MCF 10A (cell line): ENCODE measurements at regions of chr21 and their contacts with region 1.

Region 1: GRCh38 chr21:25385911-25386474 is 221.3 kb downstream of the MRPL39 start:
- DNase-seq: peak; percentile 75
- H3K4me3 Mint-ChIP-seq: no peak overlapping the region
- H3K27ac Mint-ChIP-seq: no peak overlapping the region
- H3K4me1 Mint-ChIP-seq: peaks cover 12% of the 10 kb centered on the region
- H3K27me3 Mint-ChIP-seq: no peaks in the 10 kb centered on the region
- CTCF ChIP-seq: peak; percentile 73

Region 2: DNA sequence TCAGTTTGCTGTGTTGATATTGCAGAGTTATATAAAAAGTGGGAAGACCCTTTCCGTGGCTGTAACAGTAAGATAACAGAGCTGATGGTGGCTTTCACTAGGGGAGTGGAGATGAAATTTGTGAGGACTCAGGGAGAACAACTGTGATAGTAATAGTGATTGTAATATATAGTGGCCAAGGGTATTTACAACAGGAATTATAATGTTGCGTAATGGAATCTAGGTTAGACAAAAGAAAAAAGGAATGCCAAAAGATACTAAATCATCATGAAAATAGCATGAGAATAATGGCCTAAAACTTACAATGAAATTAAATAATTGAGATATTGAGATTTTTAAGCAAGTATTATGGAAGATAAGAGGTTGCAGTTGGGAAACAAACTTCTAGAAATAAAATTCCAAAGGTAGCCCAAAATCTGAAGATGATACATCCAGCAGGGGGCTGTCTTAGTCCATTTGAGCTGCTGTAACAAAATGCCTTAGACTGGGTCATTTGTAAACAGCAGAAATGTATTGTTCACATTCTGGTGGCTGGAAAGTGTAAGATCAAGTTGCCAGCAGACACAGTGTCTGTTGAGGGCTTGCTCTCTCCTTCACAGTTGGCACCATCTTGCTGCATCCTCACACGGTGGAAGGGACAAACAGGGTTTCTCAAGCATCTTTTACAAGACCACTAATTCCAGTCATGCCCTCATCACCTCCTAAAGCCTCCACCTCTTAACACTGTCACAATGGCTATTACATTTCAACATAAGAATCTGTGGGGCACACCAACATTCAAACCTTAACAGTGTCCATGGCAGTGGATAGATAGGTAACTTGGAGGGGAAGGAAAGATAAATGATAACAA is 489.9 kb before region 1 on chr21:
- CTCF ChIA-PET with region 1: interaction called, 5 read pairs
- POLR2A ChIA-PET with region 1: interaction called, 7 read pairs
- intact Hi-C with region 1: loop called (anchors 1 kb)
- DNase-seq: peak; percentile 69
- H3K4me3 Mint-ChIP-seq: no peak overlapping the region
- H3K27ac Mint-ChIP-seq: no peak overlapping the region
- H3K4me1 Mint-ChIP-seq: peaks cover 7% of the 10 kb centered on the region
- H3K27me3 Mint-ChIP-seq: no peaks in the 10 kb centered on the region
- CTCF ChIP-seq: peak; percentile 45

Region 3: DNA sequence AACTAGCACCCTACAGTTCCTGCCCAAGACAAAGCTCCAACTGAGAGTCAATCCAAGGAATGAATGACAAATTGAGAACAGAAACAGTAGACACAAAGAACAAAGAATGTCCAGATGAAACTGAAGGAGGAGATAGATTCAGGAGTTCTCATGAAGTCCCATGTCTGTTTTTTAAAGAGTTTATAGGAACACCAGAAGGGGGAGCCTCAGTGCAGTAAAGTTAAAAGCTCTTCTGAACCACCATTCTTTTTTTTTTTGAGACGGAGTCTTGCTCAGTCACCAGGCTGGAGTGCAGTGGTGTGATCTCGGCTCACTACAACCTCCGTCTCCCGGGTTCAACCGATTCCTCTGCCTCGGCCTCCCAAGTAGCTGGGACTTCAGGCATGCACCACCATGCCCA is 102.3 kb before region 1 on chr21:
- CTCF ChIA-PET with region 1: interaction called, 9 read pairs
- POLR2A ChIA-PET with region 1: no interaction called
- intact Hi-C with region 1: loop called (anchors 2 kb)
- DNase-seq: peak; percentile 54
- H3K4me3 Mint-ChIP-seq: no peak overlapping the region
- H3K27ac Mint-ChIP-seq: no peak overlapping the region
- H3K4me1 Mint-ChIP-seq: peaks cover 6% of the 10 kb centered on the region
- H3K27me3 Mint-ChIP-seq: no peaks in the 10 kb centered on the region
- CTCF ChIP-seq: peak; percentile 37

Region 4: GRCh38 chr21:25350056-25350455 is 35.9 kb before region 1 on chr21:
- CTCF ChIA-PET with region 1: interaction called, 3 read pairs
- POLR2A ChIA-PET with region 1: no interaction called
- intact Hi-C with region 1: loop called (anchors 1 kb)
- DNase-seq: peak; percentile 53
- H3K4me3 Mint-ChIP-seq: no peak overlapping the region
- H3K27ac Mint-ChIP-seq: no peak overlapping the region
- H3K4me1 Mint-ChIP-seq: no peaks in the 10 kb centered on the region
- H3K27me3 Mint-ChIP-seq: no peaks in the 10 kb centered on the region
- CTCF ChIP-seq: peak; percentile 43